ENCODE measurements at regions of chr12 and their contacts with region 1.

Region 1: GRCh38 chr12:22334410-22335290 is at the start of gene ST8SIA1:
- DNase-seq: peak; percentile 82
- H3K4me3 ChIP-seq: peak within 1 kb of the TSS; percentile 68 to 86 (median 78)
- H3K27ac ChIP-seq: peak within 1 kb of the TSS; percentile 64 to 89 (median 83)
- H3K4me1 ChIP-seq: peaks cover 0 to 34% (median 15%) of the 10 kb centered on the region in 4 donors
- H3K27me3 ChIP-seq: no peaks in the 10 kb centered on the region
- CTCF ChIP-seq: no peak
- EP300 ChIP-seq: no peak
- POLR2A ChIP-seq: no peak
- total RNA-seq, gene ST8SIA1: 17.4 to 57.3 (median 22.5) TPM

Region 2: GRCh38 chr12:22083167-22083566 is 251.5 kb before region 1 on chr12:
- intact Hi-C with region 1: loop called (anchors 2 kb)
- DNase-seq: no peak
- H3K4me3 ChIP-seq: no peak overlapping the region
- H3K27ac ChIP-seq: no peak overlapping the region
- H3K4me1 ChIP-seq: no peaks in the 10 kb centered on the region
- H3K27me3 ChIP-seq: no peaks in the 10 kb centered on the region
- CTCF ChIP-seq: peak in 3 of 4 experiments; percentile 33 to 50 (median 48)
- EP300 ChIP-seq: no peak
- POLR2A ChIP-seq: no peak

Region 3: GRCh38 chr12:22100958-22101748 is 233.5 kb before region 1 on chr12:
- intact Hi-C with region 1: loop called (anchors 1 kb)
- DNase-seq: no peak
- H3K4me3 ChIP-seq: no peak overlapping the region
- H3K27ac ChIP-seq: no peak overlapping the region
- H3K4me1 ChIP-seq: no peaks in the 10 kb centered on the region
- H3K27me3 ChIP-seq: no peaks in the 10 kb centered on the region
- CTCF ChIP-seq: peak; percentile 21 to 49 (median 44)
- EP300 ChIP-seq: no peak
- POLR2A ChIP-seq: no peak

Region 4: GRCh38 chr12:22231836-22232235 is 102.8 kb before region 1 on chr12:
- intact Hi-C with region 1: loop called (anchors 5 kb)
- DNase-seq: no peak
- H3K4me3 ChIP-seq: no peak overlapping the region
- H3K27ac ChIP-seq: no peak overlapping the region
- H3K4me1 ChIP-seq: peaks cover 0 to 22% (median 16%) of the 10 kb centered on the region in 4 donors
- H3K27me3 ChIP-seq: no peaks in the 10 kb centered on the region
- CTCF ChIP-seq: no peak
- EP300 ChIP-seq: no peak
- POLR2A ChIP-seq: no peak

Region 5: GRCh38 chr12:22255097-22255496 is 79.6 kb before region 1 on chr12:
- intact Hi-C with region 1: loop called (anchors 5 kb)
- DNase-seq: no peak
- H3K4me3 ChIP-seq: no peak overlapping the region
- H3K27ac ChIP-seq: peak overlapping the region in 2 of 4 donors; percentile 76 to 77
- H3K4me1 ChIP-seq: peaks cover 0 to 26% (median 23%) of the 10 kb centered on the region in 4 donors
- H3K27me3 ChIP-seq: no peaks in the 10 kb centered on the region
- CTCF ChIP-seq: no peak
- EP300 ChIP-seq: no peak
- POLR2A ChIP-seq: no peak

Region 6: DNA sequence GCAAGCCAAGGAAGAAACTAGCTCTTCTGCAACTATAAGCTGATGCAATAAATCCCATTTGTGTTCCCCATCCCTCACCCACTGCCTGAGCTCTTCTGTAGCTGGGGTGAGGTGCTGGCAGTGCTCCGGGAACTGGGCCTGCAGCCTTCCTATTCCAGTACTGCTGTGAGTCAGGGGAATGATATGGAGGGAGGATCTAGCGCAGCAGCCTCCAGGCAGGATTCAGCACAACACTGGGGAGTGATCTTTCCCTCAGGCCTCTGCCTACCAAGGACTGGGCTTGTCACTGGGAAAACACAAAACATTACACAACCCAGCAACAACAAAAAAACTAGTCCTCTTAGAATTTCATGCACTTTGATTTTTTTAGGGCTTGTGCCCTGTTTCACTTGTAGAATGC is 58.8 kb before region 1 on chr12:
- intact Hi-C with region 1: loop called (anchors 5 kb)
- DNase-seq: peak; percentile 98
- H3K4me3 ChIP-seq: no peak overlapping the region
- H3K27ac ChIP-seq: peak overlapping the region; percentile 82 to 88 (median 87)
- H3K4me1 ChIP-seq: peaks cover 0 to 33% (median 28%) of the 10 kb centered on the region in 4 donors
- H3K27me3 ChIP-seq: no peaks in the 10 kb centered on the region
- CTCF ChIP-seq: no peak
- EP300 ChIP-seq: no peak
- POLR2A ChIP-seq: no peak

Region 7: DNA sequence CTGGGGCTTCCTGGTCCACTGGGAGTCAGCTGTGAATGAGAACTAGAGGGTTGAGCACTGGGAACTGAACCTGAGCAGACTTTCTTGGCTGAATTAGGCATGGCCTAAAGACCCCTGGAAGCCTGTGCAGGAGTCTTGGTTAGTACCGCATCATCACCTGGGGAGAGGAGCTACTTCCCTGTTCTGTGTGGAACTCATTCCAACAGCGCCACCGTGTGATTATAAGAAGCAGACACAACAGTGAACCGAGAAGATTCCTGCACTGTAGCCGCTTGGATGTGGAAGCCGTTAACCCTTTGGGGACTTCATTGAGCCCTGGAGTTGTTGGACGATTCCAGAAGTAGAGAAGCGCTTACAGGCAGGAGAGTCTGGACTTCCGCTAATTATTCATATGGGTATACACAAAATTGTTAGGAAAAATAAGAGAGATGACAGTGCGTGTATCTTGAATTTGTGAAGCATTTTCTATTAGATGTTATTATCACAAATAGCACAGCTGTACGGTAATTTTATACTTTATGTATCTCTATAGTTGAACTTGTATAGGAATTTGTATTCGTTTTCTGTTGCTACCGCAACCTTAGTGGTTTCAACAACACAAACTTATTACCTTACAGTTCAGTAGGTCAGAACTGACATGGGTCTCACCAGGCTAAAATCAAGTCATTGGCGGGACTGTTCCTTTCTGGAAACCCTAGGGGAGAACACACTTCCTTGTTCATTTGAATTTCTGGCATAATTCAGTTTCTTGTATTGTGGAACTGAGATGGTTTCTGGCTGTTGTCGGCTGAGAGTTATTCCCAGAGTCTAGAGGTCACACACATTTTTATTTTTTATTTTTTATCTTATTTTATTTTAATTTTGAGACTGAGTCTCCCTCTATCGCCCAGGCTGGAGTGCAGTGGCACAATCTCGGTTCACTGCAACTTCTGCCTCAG is 109.0 kb after region 1 on chr12:
- intact Hi-C with region 1: loop called (anchors 1 kb)
- DNase-seq: peak; percentile 78
- H3K4me3 ChIP-seq: no peak overlapping the region
- H3K27ac ChIP-seq: no peak overlapping the region
- H3K4me1 ChIP-seq: peaks cover 0 to 11% (median 3%) of the 10 kb centered on the region in 4 donors
- H3K27me3 ChIP-seq: no peaks in the 10 kb centered on the region
- CTCF ChIP-seq: peak; percentile 62 to 73 (median 66)
- EP300 ChIP-seq: no peak
- POLR2A ChIP-seq: no peak